ENCODE measurements at regions of chr15 and their contacts with region 1.

Region 1: DNA sequence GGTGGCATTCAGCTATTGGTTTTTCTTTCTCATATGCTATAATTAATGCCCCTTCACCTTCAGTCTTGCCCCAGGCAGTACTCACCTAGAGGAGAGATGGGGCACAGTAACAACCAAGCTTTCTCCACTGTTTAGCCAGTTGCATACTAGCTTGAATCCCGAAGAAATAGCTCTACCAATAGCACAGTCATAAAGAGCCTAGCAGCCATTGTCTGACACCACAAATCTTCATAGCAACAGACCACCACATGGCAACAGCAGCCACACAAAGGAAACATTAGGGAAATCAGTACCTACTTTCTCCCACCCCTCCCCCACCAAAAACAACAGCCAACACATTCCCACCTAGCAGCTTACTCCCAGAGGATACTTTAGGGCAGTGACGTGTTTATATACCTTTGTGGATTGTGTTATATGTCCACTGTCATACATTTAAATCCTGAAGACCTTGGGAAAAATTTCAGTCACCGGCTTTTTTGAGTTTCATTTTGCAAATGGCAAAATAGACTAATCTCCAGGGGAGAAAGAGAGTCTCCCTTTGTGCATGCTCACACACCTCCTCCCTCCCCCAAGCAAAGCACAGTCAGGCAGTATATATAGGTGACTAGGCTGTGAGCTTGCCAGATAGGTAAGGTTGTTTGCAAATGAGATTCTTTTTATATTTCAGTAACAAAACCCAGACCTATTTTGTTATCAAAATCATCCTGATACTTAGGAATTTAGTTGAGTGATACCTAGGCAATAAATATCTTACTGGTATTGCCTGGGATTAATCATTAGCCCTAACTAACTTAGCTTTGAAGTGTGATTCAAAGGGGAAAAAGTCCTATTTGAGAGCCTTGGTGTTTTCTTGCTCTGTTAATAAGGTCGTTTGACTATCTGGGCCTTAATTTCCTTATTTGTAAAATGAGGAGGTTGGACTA is 140.6 kb downstream of the RBPMS2 start:
- DNase-seq: peak; percentile 91
- ATAC-seq: peak; percentile 81
- H3K4me3 ChIP-seq: peak overlapping the region; percentile 41; the same call in 1 of the 2 replicates
- H3K27ac ChIP-seq: peak overlapping the region; percentile 97
- H3K4me1 ChIP-seq: peaks cover 45% of the 10 kb centered on the region
- H3K27me3 ChIP-seq: no peaks in the 10 kb centered on the region
- CTCF ChIP-seq: no peak
- EP300 ChIP-seq: peak; percentile 92 to 96
- POLR2A ChIP-seq: no peak
- RAD21 ChIP-seq: no peak

Region 2: GRCh38 chr15:64387562-64388168 is 247.2 kb before region 1 on chr15 and contains the start of gene TRIP4:
- CTCF ChIA-PET with region 1: interaction called, 3 read pairs
- POLR2A ChIA-PET with region 1: no interaction called
- RAD21 ChIA-PET with region 1: interaction called, 12 read pairs
- SMC1A ChIA-PET with region 1: interaction called, 7 read pairs
- in situ Hi-C with region 1: no loop called
- intact Hi-C with region 1: no loop called
- DNase-seq: peak; percentile 92
- ATAC-seq: peak; percentile 100
- H3K4me3 ChIP-seq: peak within 1 kb of the TSS; percentile 92
- H3K27ac ChIP-seq: peak within 1 kb of the TSS; percentile 71
- H3K4me1 ChIP-seq: no peaks in the 10 kb centered on the region
- H3K27me3 ChIP-seq: no peaks in the 10 kb centered on the region
- CTCF ChIP-seq: no peak; a peak in 1 of 6 replicates
- EP300 ChIP-seq: 0 out of 4 replicates have a peak, but pooled peaks of 1 of the 2 experiments have one; percentile 11
- POLR2A ChIP-seq: peak; percentile 97
- RAD21 ChIP-seq: peak; percentile 51; the same call in 1 of the 2 replicates
- polyA plus RNA-seq, gene TRIP4: 20.0 to 23.8 TPM

Region 3: GRCh38 chr15:64466408-64467141 is 168.3 kb before region 1 on chr15:
- CTCF ChIA-PET with region 1: no interaction called
- POLR2A ChIA-PET with region 1: interaction called, 6 read pairs
- RAD21 ChIA-PET with region 1: interaction called, 19 read pairs
- SMC1A ChIA-PET with region 1: interaction called, 15 read pairs
- in situ Hi-C with region 1: no loop called
- intact Hi-C with region 1: no loop called
- DNase-seq: no peak
- ATAC-seq: peak; percentile 17; the same call in 1 of the 3 replicates
- H3K4me3 ChIP-seq: no peak overlapping the region
- H3K27ac ChIP-seq: peak overlapping the region; percentile 33; the same call in 1 of the 2 replicates
- H3K4me1 ChIP-seq: peaks cover 37% of the 10 kb centered on the region
- H3K27me3 ChIP-seq: no peaks in the 10 kb centered on the region
- CTCF ChIP-seq: no peak
- EP300 ChIP-seq: no peak
- POLR2A ChIP-seq: no peak
- RAD21 ChIP-seq: no peak

Region 4: DNA sequence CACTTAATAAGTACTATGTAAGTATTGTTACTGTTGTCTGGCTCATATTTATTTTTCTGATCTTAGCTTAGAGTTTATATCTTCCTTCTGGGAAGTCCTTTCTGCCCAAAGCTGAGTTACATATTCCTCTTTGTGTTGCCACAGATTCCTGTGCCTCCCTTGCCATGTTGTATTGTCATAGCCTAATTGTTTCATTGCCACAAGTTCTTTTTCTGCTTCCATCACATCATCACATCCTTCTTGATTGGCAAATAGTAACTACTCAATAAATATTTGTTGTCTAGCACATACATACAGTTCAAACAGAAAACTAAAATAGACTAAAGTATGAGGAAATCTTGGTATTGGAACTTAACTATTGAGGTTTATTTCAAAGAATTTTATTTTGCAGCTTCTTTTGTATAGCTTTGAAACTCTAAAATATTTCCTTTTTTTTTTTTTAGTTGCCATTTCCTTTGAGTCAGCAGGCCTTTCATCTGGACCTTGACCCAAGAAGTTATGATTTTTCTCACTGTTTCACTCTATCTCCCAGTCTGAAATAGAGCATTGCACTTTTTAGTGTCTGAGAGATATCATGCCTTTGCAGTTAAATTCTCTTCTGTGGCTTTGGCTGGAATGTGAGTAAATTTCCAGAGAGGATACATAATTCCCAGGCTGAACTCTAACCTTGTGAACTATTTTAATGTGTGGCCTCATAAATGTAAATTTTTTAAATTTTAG is 76.2 kb before region 1 on chr15:
- CTCF ChIA-PET with region 1: interaction called, 3 read pairs
- POLR2A ChIA-PET with region 1: interaction called, 6 read pairs
- RAD21 ChIA-PET with region 1: interaction called, 9 read pairs
- SMC1A ChIA-PET with region 1: interaction called, 17 read pairs
- in situ Hi-C with region 1: no loop called
- intact Hi-C with region 1: no loop called
- DNase-seq: no peak
- ATAC-seq: peak; percentile 79
- H3K4me3 ChIP-seq: no peak overlapping the region
- H3K27ac ChIP-seq: peak overlapping the region; percentile 7; the same call in 1 of the 2 replicates
- H3K4me1 ChIP-seq: no peaks in the 10 kb centered on the region; the same call in 1 of the 2 replicates
- H3K27me3 ChIP-seq: no peaks in the 10 kb centered on the region
- CTCF ChIP-seq: no peak
- EP300 ChIP-seq: no peak
- POLR2A ChIP-seq: no peak
- RAD21 ChIP-seq: no peak

Region 5: DNA sequence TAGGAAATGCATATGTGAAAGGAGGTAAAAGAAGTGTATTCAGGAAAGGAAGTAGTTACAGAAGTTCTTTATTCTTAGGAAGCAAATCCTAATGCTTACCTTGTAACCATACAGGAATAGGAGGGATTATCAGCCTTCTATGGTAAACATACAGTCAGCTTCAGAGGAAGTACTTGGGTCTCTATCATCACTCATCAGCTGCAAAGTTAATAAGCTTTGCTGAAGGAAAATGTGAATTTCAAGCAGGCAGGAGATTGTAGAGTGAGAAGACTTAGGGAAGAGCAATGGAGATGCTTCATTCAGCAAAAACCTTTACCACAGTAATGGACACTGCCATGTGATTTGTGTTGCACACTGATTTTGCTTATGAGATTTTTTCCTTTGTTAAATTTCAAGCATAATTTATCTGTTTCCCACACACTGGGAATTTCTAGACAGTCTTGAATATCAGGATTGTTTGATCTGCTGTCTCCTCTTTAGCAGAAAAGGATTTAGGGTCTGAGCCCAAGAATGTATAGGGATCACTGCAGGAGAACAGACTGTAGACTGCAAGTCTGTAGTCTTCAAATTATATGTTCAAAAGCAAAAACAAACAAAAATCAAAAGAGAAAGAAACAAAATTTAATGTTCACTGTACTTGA is 23.6 kb before region 1 on chr15:
- CTCF ChIA-PET with region 1: no interaction called
- POLR2A ChIA-PET with region 1: interaction called, 4 read pairs
- RAD21 ChIA-PET with region 1: no interaction called
- SMC1A ChIA-PET with region 1: interaction called, 11 read pairs
- in situ Hi-C with region 1: no loop called
- intact Hi-C with region 1: no loop called
- DNase-seq: no peak
- ATAC-seq: no peak
- H3K4me3 ChIP-seq: no peak overlapping the region
- H3K27ac ChIP-seq: no peak overlapping the region
- H3K4me1 ChIP-seq: no peaks in the 10 kb centered on the region
- H3K27me3 ChIP-seq: no peaks in the 10 kb centered on the region
- CTCF ChIP-seq: no peak
- EP300 ChIP-seq: no peak
- POLR2A ChIP-seq: no peak
- RAD21 ChIP-seq: no peak

Region 6: DNA sequence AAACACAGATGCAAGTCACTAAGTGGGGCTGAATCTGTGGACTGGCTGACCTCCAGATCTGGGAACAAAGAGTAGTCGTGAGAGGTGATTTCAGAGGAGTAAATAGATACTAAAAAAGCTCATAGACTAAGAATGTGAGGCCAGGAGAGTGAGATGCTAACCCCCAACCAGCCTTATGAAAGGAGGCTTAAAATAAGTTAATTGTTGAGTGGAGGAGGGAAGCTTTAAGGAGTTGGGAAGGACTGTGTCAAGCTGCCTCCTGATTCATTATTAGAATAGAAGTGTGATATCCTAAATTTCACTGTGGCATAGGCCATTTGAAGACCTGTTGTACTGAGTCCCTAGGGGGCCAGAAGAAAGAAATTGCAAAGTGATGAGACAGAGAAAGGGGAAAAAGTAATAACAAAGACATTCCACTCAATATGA is 32.9 kb after region 1 on chr15:
- CTCF ChIA-PET with region 1: interaction called, 4 read pairs
- POLR2A ChIA-PET with region 1: interaction called, 6 read pairs
- RAD21 ChIA-PET with region 1: interaction called, 22 read pairs
- SMC1A ChIA-PET with region 1: interaction called, 40 read pairs
- in situ Hi-C with region 1: no loop called
- intact Hi-C with region 1: no loop called
- DNase-seq: no peak
- ATAC-seq: no peak
- H3K4me3 ChIP-seq: no peak overlapping the region
- H3K27ac ChIP-seq: no peak overlapping the region
- H3K4me1 ChIP-seq: no peaks in the 10 kb centered on the region
- H3K27me3 ChIP-seq: no peaks in the 10 kb centered on the region
- CTCF ChIP-seq: no peak
- EP300 ChIP-seq: no peak
- POLR2A ChIP-seq: no peak
- RAD21 ChIP-seq: no peak